ENCODE measurements at regions of chr11 and their contacts with region 1.

Region 1: GRCh38 chr11:103079833-103080232 is 12.1 kb downstream of the DCUN1D5 start:
- DNase-seq: no peak
- ATAC-seq: no peak
- H3K4me3 Mint-ChIP-seq: no peak overlapping the region
- H3K27ac Mint-ChIP-seq: no peak overlapping the region
- H3K4me1 Mint-ChIP-seq: no peaks in the 10 kb centered on the region
- H3K27me3 Mint-ChIP-seq: no peaks in the 10 kb centered on the region

Region 2: DNA sequence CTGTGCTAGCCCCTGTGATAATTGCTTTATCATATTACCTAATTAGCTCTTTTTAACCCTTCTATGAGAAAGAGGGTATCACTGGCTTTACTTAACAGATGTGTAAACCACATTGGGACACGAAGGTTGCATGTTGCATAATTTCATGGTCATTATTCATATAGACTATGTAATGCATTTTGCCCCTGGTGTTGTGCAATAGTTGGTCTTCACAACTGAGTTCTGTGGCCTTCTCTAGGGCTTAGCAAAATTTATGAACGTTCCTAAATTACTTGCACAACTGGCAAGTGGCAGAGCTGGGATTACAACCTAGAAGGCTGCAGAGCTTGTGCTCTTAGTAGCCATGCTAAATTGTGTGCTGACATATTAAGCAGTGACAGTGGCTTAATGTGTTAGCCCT is 1118.7 kb after region 1 on chr11:
- CTCF ChIA-PET with region 1: no interaction called
- POLR2A ChIA-PET with region 1: interaction called, 12 read pairs
- intact Hi-C with region 1: no loop called
- DNase-seq: no peak
- ATAC-seq: no peak
- H3K4me3 Mint-ChIP-seq: no peak overlapping the region
- H3K27ac Mint-ChIP-seq: no peak overlapping the region
- H3K4me1 Mint-ChIP-seq: no peaks in the 10 kb centered on the region
- H3K27me3 Mint-ChIP-seq: no peaks in the 10 kb centered on the region

Measured in activated CD4-positive, alpha-beta T cell treated with anti-CD3 and anti-CD28 coated beads for 36 hours (primary cell).